AG04449 (cell line): ENCODE measurements at regions of chr16 and their contacts with region 1.

Region 1: DNA sequence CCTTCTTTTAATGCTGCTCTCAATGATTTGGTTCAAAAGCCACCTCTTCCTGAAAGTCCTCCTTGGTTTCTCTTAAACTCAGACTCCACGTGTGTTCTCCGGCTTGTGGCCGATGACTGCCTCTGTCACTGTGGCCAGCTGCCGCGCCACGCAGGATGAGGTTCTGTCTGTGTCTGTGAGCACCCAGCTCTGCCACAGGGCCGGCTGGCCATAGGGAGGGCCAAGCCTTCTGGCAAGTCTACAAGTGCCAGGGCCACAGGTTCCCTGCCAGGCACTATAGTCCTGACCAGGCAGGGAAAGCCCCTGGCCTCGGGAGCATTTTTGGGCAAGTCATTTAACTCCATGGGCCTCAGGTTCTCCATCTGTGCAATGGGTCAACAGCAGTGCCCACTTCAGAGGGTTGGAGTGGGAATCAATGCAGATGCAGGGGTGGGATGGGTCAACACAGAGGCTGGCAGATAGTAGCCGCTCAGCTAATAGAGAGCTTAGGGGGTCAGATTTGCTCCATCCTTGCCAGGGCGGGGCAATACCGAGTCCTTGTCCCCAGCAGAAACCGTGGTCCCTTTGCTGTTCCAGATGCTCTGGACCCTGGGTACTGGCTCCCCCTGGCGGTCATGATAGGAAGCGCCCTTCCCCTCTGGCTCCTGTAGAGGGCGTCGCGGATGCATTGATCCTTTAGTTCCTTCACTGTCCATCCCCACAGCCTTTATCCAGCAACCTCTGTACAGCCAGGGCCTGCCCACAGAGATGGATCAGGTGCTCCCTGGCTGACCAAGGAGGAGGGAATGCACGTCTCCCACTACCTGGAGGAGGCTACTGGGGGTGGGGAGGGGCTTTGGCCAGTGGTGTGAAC is 19.3 kb upstream of the ADGRG3 start:
- DNase-seq: no peak
- H3K4me3 ChIP-seq: no peak overlapping the region
- CTCF ChIP-seq: peak; percentile 100

Region 2: GRCh38 chr16:57564571-57565270 is 84.1 kb before region 1 on chr16:
- CTCF ChIA-PET with region 1: interaction called, 13 read pairs
- POLR2A ChIA-PET with region 1: no interaction called
- DNase-seq: no peak
- H3K4me3 ChIP-seq: no peak overlapping the region
- CTCF ChIP-seq: no peak

Region 3: DNA sequence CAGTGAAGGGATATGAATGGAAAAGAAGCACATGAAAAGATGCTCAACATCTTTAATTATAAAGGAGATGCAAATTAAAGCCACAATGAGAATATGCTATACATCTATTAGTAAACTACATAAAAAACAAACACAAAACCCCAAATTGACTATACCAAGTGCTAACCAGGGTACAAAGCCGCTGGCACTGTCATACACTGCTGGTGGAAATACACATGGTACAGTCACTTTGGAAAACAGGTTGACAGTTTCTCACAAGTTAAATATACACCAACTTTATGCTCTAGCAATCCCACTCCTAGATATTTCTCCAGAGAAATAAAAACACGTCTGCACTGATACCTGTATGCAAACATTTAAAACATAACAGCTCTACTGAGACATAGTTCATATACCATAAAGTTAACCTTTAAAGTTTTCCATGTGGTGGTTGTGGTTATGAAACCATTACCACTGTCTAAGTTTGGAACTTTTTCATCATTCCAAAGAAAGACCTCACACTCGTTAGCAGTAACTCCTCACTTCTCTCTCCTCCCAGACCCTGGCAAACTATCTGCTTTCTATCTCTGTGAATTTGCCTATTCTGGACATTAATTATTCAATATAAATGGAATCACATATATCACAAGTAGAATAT is 63.6 kb before region 1 on chr16:
- CTCF ChIA-PET with region 1: interaction called, 256 read pairs
- POLR2A ChIA-PET with region 1: no interaction called
- DNase-seq: no peak
- H3K4me3 ChIP-seq: no peak overlapping the region
- CTCF ChIP-seq: no peak

Region 4: DNA sequence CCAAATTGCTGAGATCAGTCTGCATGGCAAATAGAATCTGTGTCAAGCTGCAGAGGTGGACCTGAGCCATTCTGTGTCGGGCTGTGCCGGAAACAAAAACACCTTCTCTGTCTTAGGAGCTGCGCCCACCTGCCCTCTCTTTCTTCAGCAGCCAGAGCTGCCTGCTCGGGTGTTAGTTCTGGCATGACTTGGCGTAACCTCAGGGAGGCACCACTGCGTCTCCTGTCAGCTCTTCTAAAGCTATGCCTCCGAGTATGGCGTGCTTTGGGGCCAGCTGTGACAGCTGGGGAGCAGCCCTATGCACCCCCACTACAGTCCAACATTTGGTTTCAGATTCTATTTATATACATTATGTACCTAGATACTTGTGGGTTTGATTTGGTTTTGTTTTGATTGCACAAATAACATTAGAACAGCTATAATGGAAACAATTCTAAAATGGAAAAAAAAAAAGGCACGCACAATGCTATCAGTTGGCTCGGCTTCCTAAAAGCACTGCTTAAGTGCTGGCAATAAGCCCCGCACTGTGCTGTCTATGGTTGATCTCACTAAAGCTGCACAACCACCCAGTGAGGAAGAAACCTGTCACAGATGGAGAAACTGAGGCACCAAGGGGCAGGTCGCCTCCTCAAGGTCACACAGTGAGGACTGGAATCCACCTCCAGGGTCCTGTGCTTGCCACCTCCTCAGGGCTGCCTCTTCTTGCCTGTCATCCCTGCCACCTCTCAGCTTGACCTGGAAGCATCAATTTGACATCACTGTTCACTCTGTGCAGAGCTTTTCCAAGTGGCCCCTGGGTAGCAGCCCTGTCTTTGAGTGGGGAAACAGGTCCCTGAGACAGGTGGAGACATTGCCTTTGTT is 39.0 kb before region 1 on chr16:
- CTCF ChIA-PET with region 1: interaction called, 48 read pairs
- POLR2A ChIA-PET with region 1: no interaction called
- DNase-seq: no peak
- H3K4me3 ChIP-seq: no peak overlapping the region
- CTCF ChIP-seq: no peak

Region 5: DNA sequence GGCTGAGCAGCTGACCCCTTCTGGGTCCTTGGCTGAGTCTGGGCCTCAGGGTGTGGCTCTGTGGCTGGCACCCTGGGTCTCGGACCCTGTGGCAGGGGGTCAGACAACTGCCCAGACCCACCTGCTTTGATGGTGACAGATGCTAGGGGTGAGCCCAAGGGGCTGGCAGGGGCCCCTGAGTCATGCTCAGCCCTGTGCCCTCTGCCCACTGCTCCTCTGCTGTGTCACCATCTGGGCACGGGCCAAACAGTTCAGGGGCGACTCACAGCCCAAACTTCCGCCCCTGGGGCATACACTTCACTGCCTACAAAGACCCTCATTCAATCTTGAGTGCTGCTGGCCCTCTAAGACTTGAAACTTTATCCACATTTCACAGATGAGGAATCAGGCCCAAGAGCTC is 14.6 kb before region 1 on chr16:
- CTCF ChIA-PET with region 1: interaction called, 137 read pairs
- POLR2A ChIA-PET with region 1: no interaction called
- DNase-seq: no peak
- H3K4me3 ChIP-seq: no peak overlapping the region
- CTCF ChIP-seq: no peak

Region 6: DNA sequence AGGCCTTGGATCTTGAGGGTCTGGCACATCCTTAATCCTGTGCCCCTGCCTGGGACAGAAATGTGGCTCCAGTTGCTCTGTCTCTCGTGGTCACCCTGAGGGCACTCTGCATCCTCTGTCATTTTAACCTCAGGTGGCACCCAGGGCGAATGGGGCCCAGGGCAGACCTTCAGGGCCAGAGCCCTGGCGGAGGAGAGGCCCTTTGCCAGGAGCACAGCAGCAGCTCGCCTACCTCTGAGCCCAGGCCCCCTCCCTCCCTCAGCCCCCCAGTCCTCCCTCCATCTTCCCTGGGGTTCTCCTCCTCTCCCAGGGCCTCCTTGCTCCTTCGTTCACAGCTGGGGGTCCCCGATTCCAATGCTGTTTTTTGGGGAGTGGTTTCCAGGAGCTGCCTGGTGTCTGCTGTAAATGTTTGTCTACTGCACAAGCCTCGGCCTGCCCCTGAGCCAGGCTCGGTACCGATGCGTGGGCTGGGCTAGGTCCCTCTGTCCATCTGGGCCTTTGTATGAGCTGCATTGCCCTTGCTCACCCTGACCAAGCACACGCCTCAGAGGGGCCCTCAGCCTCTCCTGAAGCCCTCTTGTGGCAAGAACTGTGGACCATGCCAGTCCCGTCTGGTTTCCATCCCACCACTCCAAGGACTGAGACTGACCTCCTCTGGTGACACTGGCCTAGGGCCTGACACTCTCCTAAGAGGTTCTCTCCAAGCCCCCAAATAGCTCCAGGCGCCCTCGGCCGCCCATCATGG is 15.3 kb after region 1 on chr16:
- CTCF ChIA-PET with region 1: interaction called, 19 read pairs
- POLR2A ChIA-PET with region 1: no interaction called
- DNase-seq: no peak
- H3K4me3 ChIP-seq: no peak overlapping the region
- CTCF ChIP-seq: peak; percentile 1

Region 7: DNA sequence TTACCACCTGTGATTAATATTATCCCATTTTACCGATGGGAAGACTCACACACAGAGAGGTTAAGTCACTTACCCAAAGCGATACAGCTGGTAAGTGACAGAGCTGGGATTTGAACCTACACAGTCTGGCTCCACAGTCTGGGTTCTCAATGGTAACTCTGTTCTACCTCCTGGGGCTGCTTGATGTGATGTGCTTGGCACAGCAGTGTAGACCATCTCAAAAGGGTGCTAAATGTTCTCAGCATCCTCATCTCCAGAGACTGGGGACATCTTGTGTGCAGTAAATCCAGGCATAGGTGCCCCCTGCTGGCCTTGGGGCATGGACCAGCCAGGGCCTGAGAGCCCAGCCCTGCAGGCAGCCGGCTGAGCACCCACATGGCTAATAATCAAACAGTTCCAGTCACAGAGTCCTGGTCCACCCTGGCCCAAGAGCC is 71.3 kb after region 1 on chr16:
- CTCF ChIA-PET with region 1: interaction called, 12 read pairs
- POLR2A ChIA-PET with region 1: no interaction called
- DNase-seq: no peak
- H3K4me3 ChIP-seq: no peak overlapping the region
- CTCF ChIP-seq: peak; percentile 84

Region 8: GRCh38 chr16:58095190-58095960 is 446.6 kb after region 1 on chr16:
- CTCF ChIA-PET with region 1: no interaction called
- POLR2A ChIA-PET with region 1: no interaction called
- DNase-seq: no peak
- H3K4me3 ChIP-seq: no peak overlapping the region
- CTCF ChIP-seq: no peak

Region 9: DNA sequence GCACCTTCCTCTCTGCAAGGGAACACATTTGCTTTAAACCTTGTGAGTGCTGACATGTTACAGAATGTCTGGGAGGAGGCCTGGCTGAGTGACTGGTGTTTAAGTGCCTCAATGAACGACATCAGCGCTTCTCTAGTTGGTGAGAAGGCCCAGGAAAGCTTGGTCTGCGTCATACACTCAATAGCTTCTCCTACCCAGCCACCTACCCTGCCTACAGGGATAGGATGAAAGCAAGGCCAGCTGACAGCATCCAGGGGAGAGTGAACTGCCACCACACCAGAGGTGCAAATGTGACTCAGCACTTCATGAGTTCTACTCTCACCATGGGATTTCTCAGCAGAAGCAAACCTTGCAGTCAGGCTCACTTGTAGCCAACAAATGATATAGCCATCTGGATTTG is 512.0 kb after region 1 on chr16:
- CTCF ChIA-PET with region 1: no interaction called
- POLR2A ChIA-PET with region 1: no interaction called
- DNase-seq: no peak
- H3K4me3 ChIP-seq: no peak overlapping the region
- CTCF ChIP-seq: no peak